ENCODE measurements at regions of chr4 and their contacts with region 1.

Region 1: GRCh38 chr4:184782731-184783373 is 42.9 kb downstream of the ACSL1 start:
- DNase-seq: peak; percentile 30 to 83 (median 80)
- H3K4me3 ChIP-seq: peak overlapping the region in 4 of 7 experiments; percentile 5 to 59 (median 56)
- H3K27ac ChIP-seq: no peak overlapping the region
- H3K4me1 ChIP-seq: peaks cover 0 to 16% (median 15%) of the 10 kb centered on the region in 4 experiments
- H3K27me3 ChIP-seq: no peaks in the 10 kb centered on the region

Region 2: DNA sequence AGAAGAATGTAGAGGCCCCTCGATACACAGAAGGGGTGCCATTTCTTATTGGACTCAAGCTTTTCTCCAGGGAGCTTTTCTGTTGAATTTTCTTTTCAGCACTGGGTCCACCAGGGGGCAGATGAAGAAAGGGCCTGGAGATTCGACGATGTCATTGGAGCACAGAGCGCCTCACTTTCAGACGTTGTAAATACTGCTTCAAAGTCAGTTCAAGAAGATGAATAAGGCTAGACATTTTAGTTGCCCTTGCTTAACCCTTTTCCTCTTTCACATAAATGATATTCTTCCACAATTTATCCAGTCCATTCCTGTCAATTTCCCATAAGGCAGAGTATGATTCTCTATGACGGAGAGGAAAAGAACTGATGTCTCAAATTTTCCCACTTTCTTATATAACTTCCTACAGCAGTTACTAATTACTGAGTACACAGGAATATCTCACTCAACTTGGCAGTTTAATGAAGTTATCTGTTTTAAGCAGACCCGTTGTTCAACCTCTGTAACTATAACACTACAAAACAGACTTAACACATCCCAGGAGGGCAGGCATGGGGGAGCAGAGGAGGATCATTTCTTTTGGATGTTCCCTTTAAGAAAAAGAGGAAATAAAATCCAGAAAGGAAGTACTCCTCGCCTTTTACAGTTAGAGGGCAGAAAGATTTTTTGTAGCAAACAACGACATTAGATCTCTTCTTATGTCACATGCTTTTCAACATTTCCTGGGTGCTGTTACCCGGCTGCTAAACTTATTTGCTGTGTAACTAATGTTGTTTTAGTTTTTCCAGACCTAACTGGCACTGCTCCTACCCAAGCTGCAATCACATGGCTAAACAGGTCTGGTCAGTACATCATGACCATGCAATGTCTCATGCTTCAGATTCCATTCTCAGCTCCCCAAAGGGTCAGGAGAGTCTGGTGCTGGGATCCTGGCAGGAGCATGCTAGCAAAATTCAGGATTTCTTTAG is 36.7 kb before region 1 on chr4:
- CTCF ChIA-PET with region 1: interaction called, 12 read pairs
- POLR2A ChIA-PET with region 1: no interaction called
- DNase-seq: peak; percentile 87 to 94 (median 93)
- H3K4me3 ChIP-seq: peak overlapping the region in 5 of 7 experiments; percentile 8 to 52 (median 19)
- H3K27ac ChIP-seq: peak overlapping the region; percentile 20 to 67
- H3K4me1 ChIP-seq: peaks cover 19 to 34% (median 27%) of the 10 kb centered on the region in 4 experiments
- H3K27me3 ChIP-seq: no peaks in the 10 kb centered on the region

Region 3: GRCh38 chr4:184756399-184756798 is 26.5 kb before region 1 on chr4:
- CTCF ChIA-PET with region 1: no interaction called
- POLR2A ChIA-PET with region 1: no interaction called
- DNase-seq: no peak
- H3K4me3 ChIP-seq: no peak overlapping the region
- H3K27ac ChIP-seq: no peak overlapping the region
- H3K4me1 ChIP-seq: peaks cover 5 to 11% (median 6%) of the 10 kb centered on the region in 4 experiments
- H3K27me3 ChIP-seq: no peaks in the 10 kb centered on the region

Region 4: GRCh38 chr4:184792950-184793555 is 10.2 kb after region 1 on chr4:
- CTCF ChIA-PET with region 1: interaction called, 18 read pairs
- POLR2A ChIA-PET with region 1: interaction called, 10 read pairs
- DNase-seq: peak; percentile 87 to 94 (median 91)
- H3K4me3 ChIP-seq: peak overlapping the region in 1 of 7 experiments; percentile 42
- H3K27ac ChIP-seq: peak overlapping the region in 1 of 2 experiments; percentile 17
- H3K4me1 ChIP-seq: peaks cover 21 to 35% (median 32%) of the 10 kb centered on the region in 4 experiments
- H3K27me3 ChIP-seq: no peaks in the 10 kb centered on the region

Region 5: GRCh38 chr4:184983672-184984356 is 201.0 kb after region 1 on chr4:
- CTCF ChIA-PET with region 1: interaction called, 12 read pairs
- POLR2A ChIA-PET with region 1: no interaction called
- DNase-seq: peak; percentile 57 to 63 (median 58)
- H3K4me3 ChIP-seq: peak overlapping the region in 4 of 7 experiments; percentile 19 to 54 (median 44)
- H3K27ac ChIP-seq: no peak overlapping the region
- H3K4me1 ChIP-seq: peaks cover 0 to 13% (median 8%) of the 10 kb centered on the region in 4 experiments
- H3K27me3 ChIP-seq: peaks cover 0 to 7% (median 0%) of the 10 kb centered on the region in 5 experiments

Measured in common myeloid progenitor, CD34-positive (primary cell).